Ovary (tissue), 10 donors: ENCODE measurements at regions of chr5 and their contacts with region 1.

Region 1: GRCh38 chr5:179559284-179560252 is 9.2 kb downstream of the RUFY1 start:
- DNase-seq: peak; percentile 96 to 98 (median 98)
- H3K4me3 ChIP-seq: peak overlapping the region; percentile 74
- H3K27ac ChIP-seq: peak overlapping the region in 1 of 2 donors; percentile 76
- H3K4me1 ChIP-seq: peaks cover 2% of the 10 kb centered on the region
- H3K27me3 ChIP-seq: no peaks in the 10 kb centered on the region
- CTCF ChIP-seq: no peak
- EP300 ChIP-seq: no peak
- POLR2A ChIP-seq: peak; percentile 88

Region 2: DNA sequence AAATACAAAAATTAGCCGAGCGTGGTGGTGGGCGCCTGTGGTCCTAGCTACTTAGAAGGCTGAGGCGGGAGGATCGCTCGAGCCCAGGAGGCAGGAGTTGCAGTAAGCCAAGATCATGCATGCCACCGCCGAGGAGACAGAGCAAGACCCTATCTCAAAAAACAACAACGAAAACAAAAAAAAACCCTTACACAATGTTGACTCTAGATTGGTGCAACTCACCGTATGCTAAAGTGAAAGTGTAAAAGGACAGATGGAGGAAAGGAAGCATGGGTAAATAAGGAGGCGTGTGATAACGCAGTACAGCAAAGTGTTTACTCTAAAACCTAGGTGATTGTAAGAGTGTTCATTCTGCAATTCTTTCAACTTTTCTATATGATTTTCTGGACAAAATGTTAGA is 25.1 kb before region 1 on chr5:
- intact Hi-C with region 1: no loop called
- DNase-seq: no peak
- H3K4me3 ChIP-seq: no peak overlapping the region
- H3K27ac ChIP-seq: no peak overlapping the region
- H3K4me1 ChIP-seq: peaks cover 3% of the 10 kb centered on the region
- H3K27me3 ChIP-seq: no peaks in the 10 kb centered on the region
- CTCF ChIP-seq: no peak
- EP300 ChIP-seq: no peak
- POLR2A ChIP-seq: no peak

Region 3: DNA sequence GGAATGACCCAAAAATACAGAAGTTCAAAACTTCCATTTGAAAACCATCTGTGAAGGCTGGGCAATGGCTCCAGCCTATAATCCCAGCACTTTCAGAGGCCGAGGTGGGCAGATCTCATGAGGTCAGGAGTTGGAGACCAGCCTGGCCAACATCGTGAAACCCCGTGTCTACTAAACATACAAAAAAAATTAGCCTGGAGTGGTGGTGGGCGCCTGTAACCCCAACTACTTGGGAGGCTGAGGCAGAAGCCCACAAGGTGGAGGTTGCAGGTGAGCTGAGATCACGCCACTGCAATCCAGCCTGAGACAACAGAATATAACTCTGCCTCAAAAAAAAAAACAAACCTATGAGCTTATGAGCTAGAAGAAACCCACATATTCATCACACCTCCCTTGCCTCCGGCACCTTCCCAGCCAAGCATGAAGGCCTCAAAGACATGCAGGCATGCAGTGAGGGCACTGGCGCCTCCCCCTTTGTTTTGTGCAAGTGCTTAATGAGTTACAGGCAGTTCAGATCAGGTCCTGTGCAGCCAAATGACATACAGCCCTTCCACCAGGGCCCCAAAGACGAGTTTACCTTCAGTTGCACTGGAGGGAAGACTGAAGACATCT is 54.0 kb after region 1 on chr5:
- intact Hi-C with region 1: loop called in 1 of 4 experiments (anchors 10 kb)
- DNase-seq: peak in 1 of 5 donors; percentile 35
- H3K4me3 ChIP-seq: no peak overlapping the region
- H3K27ac ChIP-seq: no peak overlapping the region
- H3K4me1 ChIP-seq: no peaks in the 10 kb centered on the region
- H3K27me3 ChIP-seq: no peaks in the 10 kb centered on the region
- CTCF ChIP-seq: no peak
- EP300 ChIP-seq: no peak
- POLR2A ChIP-seq: no peak

Region 4: GRCh38 chr5:179623003-179623880 is 63.7 kb after region 1 on chr5 and contains the start of gene HNRNPH1:
- intact Hi-C with region 1: loop called in 3 of 4 experiments (anchors 2 to 10 kb)
- DNase-seq: peak; percentile 99 to 100 (median 99)
- H3K4me3 ChIP-seq: peak within 1 kb of the TSS; percentile 100
- H3K27ac ChIP-seq: peak within 1 kb of the TSS; percentile 95 to 99
- H3K4me1 ChIP-seq: peaks cover 7% of the 10 kb centered on the region
- H3K27me3 ChIP-seq: no peaks in the 10 kb centered on the region
- CTCF ChIP-seq: peak in 2 of 3 donors; percentile 13 to 22
- EP300 ChIP-seq: no peak
- POLR2A ChIP-seq: peak; percentile 100
- total RNA-seq, gene HNRNPH1: 416 to 679 (median 577) TPM

Region 5: DNA sequence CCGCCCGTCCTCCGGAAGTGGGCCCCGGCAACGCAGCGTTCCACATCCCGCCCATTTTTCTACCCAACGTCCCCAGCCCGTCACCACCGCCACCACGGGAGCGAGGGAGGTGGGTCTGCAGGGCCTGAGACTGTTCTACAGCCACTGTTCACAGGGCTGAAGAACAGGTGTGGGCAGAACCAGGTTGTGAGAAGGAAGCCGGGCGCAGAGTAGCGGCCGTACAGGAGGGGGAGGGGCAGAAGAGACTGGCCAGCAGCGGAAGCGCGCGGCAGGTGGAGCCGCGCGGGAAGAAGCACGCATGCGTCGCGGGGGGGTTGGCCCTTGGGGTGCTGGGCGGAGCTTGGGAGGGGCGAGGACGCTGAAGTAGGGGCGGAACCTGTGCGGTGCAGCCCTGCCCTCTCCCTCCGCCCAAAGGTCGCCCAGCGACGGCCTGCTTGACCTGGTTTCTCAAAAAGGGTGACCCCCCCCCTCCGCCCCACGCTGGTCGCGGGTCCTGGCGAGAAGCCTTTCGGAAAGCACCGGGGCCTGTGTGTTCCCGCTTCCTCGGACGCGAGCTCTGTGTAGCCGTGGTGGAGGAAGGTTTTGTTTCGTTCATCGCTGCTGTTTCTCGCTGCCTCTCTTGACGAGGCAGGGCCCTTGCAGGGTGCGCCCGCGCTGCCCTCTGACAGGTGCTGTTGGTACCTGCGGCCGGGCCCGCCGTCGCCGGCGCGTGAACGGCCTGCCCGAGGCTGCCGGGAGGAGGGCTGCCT is 1250.8 kb after region 1 on chr5:
- intact Hi-C with region 1: loop called in 1 of 4 experiments (anchors 10 kb)
- DNase-seq: peak; percentile 97 to 99 (median 99)
- H3K4me3 ChIP-seq: peak overlapping the region; percentile 64
- H3K27ac ChIP-seq: peak overlapping the region; percentile 93 to 98
- H3K4me1 ChIP-seq: peaks cover 19% of the 10 kb centered on the region
- H3K27me3 ChIP-seq: no peaks in the 10 kb centered on the region
- CTCF ChIP-seq: no peak
- EP300 ChIP-seq: no peak
- POLR2A ChIP-seq: peak; percentile 80